IMR-90 (cell line): ENCODE measurements at regions of chr7 and their contacts with region 1.

Region 1: DNA sequence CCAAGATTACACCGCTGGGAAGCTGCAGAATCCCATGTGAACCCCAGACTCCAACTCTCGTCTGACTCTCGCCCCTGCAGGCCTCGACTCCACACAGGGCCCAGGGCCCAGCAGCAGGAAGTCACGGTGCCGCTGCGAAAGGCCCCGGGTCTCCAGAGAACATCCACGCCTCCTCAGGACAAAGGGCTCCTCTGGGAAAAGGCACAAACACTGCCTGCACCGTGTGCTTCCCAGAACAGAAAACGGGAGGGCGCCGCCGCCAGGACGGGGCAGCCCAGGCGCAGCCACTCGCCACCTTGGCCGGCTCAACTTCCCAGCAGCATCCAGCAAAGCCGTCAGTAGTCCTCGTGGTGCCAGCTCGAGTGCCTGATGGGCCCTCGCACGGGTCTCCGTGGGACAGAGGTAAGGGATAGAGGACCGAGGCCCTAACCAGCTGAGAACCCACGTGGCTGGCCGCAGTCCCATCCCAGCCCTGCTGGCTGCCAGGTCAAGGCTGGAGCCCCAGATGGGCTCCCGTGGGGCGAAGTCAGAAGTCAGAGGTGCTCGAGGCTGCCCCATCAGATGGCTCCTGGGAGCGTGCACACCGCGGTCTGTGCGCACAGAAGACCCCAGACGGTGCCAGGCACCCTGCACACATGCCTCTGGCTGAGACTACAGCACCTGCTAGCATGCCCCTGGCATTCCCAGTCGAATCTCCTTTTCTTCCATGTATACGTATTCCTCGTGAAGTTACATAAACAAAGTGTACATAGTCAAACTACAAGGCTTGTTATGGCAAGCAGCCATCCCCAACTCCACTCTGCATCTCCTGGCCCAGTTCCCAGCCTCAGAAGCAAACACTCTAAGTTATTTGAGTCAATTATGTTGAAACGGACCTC is 60.2 kb downstream of the MAD1L1 start:
- DNase-seq: peak; percentile 97
- ATAC-seq: peak; percentile 63
- H3K4me3 ChIP-seq: no peak overlapping the region
- H3K27ac ChIP-seq: no peak overlapping the region
- H3K4me1 ChIP-seq: peaks cover 24% of the 10 kb centered on the region
- H3K27me3 ChIP-seq: peaks cover 4% of the 10 kb centered on the region; the same call in 1 of the 2 replicates
- CTCF ChIP-seq: no peak
- POLR2A ChIP-seq: no peak
- RAD21 ChIP-seq: no peak

Region 2: DNA sequence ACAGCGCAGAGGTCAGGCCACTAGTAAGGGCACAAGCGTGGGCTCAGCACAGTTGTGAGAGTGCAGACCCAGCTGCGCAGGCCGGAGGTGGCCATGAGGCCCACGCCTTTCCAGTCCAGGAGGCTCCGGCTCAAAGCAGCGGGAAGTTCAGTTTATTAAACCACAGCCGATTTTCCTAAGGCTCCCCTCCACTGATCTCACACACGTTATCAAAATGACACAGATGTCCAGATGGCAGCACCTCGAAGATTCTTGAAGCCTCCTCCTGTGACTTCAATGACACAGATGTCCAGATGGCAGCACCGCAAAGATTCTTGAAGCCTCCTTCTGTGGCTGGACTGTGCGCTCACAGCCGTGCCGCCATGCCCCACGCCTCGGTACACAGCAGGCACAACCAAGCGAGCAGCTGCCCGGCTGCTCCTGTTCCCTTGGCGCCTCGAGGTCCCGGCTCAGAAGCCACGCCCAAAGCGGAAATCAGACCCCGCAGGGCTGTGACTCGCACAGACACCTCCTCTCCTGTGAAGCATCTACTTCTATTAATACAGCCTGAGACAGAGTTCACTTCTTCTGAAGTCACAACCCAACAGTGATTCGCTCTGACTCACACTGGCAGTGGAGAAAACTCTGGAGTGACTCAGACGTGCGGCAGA is 62.5 kb before region 1 on chr7:
- CTCF ChIA-PET with region 1: no interaction called
- POLR2A ChIA-PET with region 1: no interaction called
- dilution Hi-C with region 1: no loop called
- in situ Hi-C with region 1: no loop called
- intact Hi-C with region 1: loop called (anchors 5 kb)
- DNase-seq: peak; percentile 96
- ATAC-seq: peak; percentile 78
- H3K4me3 ChIP-seq: no peak overlapping the region
- H3K27ac ChIP-seq: peak overlapping the region; percentile 25; the same call in 1 of the 2 replicates
- H3K4me1 ChIP-seq: peaks cover 43% of the 10 kb centered on the region
- H3K27me3 ChIP-seq: no peaks in the 10 kb centered on the region
- CTCF ChIP-seq: no peak
- POLR2A ChIP-seq: no peak
- RAD21 ChIP-seq: no peak

Region 3: GRCh38 chr7:2209146-2209960 is 36.8 kb after region 1 on chr7:
- CTCF ChIA-PET with region 1: no interaction called
- POLR2A ChIA-PET with region 1: no interaction called
- dilution Hi-C with region 1: no loop called
- in situ Hi-C with region 1: no loop called
- intact Hi-C with region 1: no loop called
- DNase-seq: peak; percentile 68
- ATAC-seq: peak; percentile 94
- H3K4me3 ChIP-seq: no peak overlapping the region
- H3K27ac ChIP-seq: no peak overlapping the region
- H3K4me1 ChIP-seq: peaks cover 9% of the 10 kb centered on the region
- H3K27me3 ChIP-seq: no peaks in the 10 kb centered on the region
- CTCF ChIP-seq: peak; percentile 87
- POLR2A ChIP-seq: no peak
- RAD21 ChIP-seq: peak; percentile 96